PC-9 (cell line): ENCODE measurements at regions of chr1 and their contacts with region 1.

Region 1: GRCh38 chr1:44029906-44030604 is 1.2 kb downstream of the SLC6A9 start:
- DNase-seq: peak; percentile 80 to 93
- H3K4me3 ChIP-seq: peak overlapping the region; percentile 97
- H3K27ac ChIP-seq: peak overlapping the region; percentile 91
- H3K4me1 ChIP-seq: peaks cover 57% of the 10 kb centered on the region
- H3K27me3 ChIP-seq: no peaks in the 10 kb centered on the region
- CTCF ChIP-seq: no peak

Region 2: GRCh38 chr1:43706598-43707495 is 323.2 kb before region 1 on chr1:
- CTCF ChIA-PET with region 1: no interaction called
- POLR2A ChIA-PET with region 1: no interaction called
- intact Hi-C with region 1: loop called (anchors 5 kb)
- DNase-seq: peak; percentile 81 to 96
- H3K4me3 ChIP-seq: peak overlapping the region; percentile 92
- H3K27ac ChIP-seq: no peak overlapping the region
- H3K4me1 ChIP-seq: peaks cover 28% of the 10 kb centered on the region
- H3K27me3 ChIP-seq: no peaks in the 10 kb centered on the region
- CTCF ChIP-seq: no peak

Region 3: GRCh38 chr1:43946236-43947060 is 83.6 kb before region 1 on chr1 and contains the start of gene IPO13:
- CTCF ChIA-PET with region 1: no interaction called
- POLR2A ChIA-PET with region 1: interaction called, 38 read pairs
- intact Hi-C with region 1: no loop called
- DNase-seq: peak; percentile 86 to 98
- H3K4me3 ChIP-seq: peak within 1 kb of the TSS; percentile 74
- H3K27ac ChIP-seq: peak within 1 kb of the TSS; percentile 75
- H3K4me1 ChIP-seq: peaks cover 26% of the 10 kb centered on the region
- H3K27me3 ChIP-seq: no peaks in the 10 kb centered on the region
- CTCF ChIP-seq: peak; percentile 79
- total RNA-seq, gene IPO13: 25.0 and 27.2 TPM in 2 replicates

Region 4: DNA sequence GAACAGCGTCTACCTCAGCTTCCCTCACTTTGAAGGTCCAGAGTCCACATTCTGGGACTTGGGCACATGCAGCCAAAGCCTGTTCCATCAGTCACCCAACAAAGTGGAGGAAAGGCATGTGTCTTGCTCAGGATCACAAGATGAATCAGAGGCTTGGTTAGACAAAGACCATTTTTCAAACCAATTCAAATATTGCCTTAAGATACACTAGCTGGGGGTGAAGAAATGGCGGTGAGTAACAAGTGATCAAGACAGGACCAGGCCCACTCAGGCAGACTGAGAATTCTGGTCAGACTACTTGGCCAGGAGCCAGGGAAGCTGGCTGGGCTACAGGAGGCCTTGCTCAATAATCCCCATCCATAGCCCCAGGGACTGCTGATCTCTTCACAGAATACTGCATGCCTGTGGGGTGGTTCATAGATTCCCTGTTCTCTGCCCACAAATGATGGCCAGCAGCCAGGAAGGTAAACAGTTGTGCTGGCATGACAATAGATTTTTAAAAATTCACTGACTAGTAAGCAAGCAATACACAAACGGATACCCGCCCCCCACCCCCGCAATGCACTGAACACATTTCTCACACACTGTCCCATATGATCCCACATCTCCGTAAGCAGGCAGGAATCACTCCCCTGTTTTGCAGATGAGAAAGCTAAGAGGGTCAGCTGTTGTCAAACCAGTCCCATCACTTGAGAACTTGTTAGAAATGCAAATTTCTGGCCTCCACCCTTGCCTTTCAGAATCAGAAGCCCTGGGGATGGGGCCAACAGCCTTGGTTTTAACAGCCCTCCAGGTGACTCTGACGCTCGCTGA is 297.8 kb after region 1 on chr1:
- CTCF ChIA-PET with region 1: no interaction called
- POLR2A ChIA-PET with region 1: interaction called, 4 read pairs
- intact Hi-C with region 1: loop called (anchors 5 kb)
- DNase-seq: peak; percentile 99
- H3K4me3 ChIP-seq: no peak overlapping the region
- H3K27ac ChIP-seq: peak overlapping the region; percentile 72
- H3K4me1 ChIP-seq: peaks cover 45% of the 10 kb centered on the region
- H3K27me3 ChIP-seq: no peaks in the 10 kb centered on the region
- CTCF ChIP-seq: no peak